GM12878 (cell line): ENCODE measurements at regions of chr4 and their contacts with region 1.

Region 1: DNA sequence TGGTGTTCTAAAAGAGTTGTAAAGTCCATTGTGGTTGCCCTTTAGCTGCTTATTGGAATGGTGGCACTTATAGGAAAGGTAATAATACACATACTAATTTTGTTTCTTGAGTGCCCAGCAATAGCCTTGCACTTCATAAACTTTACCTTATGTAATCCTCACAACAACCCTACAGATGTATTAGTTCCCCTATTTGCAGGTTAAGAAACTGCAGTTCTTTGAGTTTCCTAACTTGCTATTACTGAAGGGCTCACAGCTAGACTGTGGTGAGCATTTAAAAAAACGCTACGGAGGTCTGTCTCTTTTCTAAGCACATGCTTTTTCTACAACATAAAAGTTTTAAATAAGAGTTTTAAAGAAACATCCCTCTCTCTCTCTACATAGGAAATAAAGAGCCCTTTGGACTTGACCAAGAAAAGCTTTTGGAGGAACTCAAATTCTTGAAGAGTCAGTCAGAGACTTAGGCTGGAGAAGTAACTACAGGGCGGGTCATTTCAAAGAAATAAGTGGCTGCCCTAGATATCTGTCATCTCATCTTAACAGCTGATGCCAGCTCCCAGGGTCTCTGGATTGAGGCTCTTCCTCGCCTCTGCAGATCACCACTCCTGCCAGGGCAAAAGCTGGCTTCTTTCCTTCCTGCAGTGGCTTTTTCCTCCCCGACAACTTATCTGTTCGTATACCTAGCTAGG is 42.0 kb upstream of the FBXW7 start:
- DNase-seq: no peak
- ATAC-seq: peak; percentile 94
- H3K4me3 ChIP-seq: no peak overlapping the region
- H3K27ac ChIP-seq: no peak overlapping the region
- H3K4me1 ChIP-seq: no peaks in the 10 kb centered on the region
- H3K27me3 ChIP-seq: no peaks in the 10 kb centered on the region
- CTCF ChIP-seq: 0 out of 6 replicates have a peak, but pooled peaks of 1 of the 3 experiments have one; percentile 5
- EP300 ChIP-seq: no peak
- POLR2A ChIP-seq: no peak
- RAD21 ChIP-seq: no peak

Region 2: GRCh38 chr4:151921811-151922210 is 656.0 kb before region 1 on chr4:
- CTCF ChIA-PET with region 1: no interaction called
- POLR2A ChIA-PET with region 1: no interaction called
- RAD21 ChIA-PET with region 1: no interaction called
- SMC1A ChIA-PET with region 1: no interaction called
- in situ Hi-C with region 1: no loop called
- intact Hi-C with region 1: no loop called
- DNase-seq: no peak
- ATAC-seq: no peak
- H3K4me3 ChIP-seq: no peak overlapping the region
- H3K27ac ChIP-seq: no peak overlapping the region
- H3K4me1 ChIP-seq: no peaks in the 10 kb centered on the region
- H3K27me3 ChIP-seq: no peaks in the 10 kb centered on the region
- CTCF ChIP-seq: no peak
- EP300 ChIP-seq: no peak
- POLR2A ChIP-seq: no peak
- RAD21 ChIP-seq: no peak

Region 3: GRCh38 chr4:152591396-152591795 is 13.5 kb after region 1 on chr4:
- CTCF ChIA-PET with region 1: interaction called, 3 read pairs
- POLR2A ChIA-PET with region 1: interaction called, 4 read pairs
- RAD21 ChIA-PET with region 1: interaction called, 3 read pairs
- SMC1A ChIA-PET with region 1: interaction called, 37 read pairs
- in situ Hi-C with region 1: no loop called
- intact Hi-C with region 1: no loop called
- DNase-seq: no peak
- ATAC-seq: peak; percentile 61
- H3K4me3 ChIP-seq: no peak overlapping the region
- H3K27ac ChIP-seq: no peak overlapping the region
- H3K4me1 ChIP-seq: peaks cover 18% of the 10 kb centered on the region
- H3K27me3 ChIP-seq: no peaks in the 10 kb centered on the region
- CTCF ChIP-seq: no peak
- EP300 ChIP-seq: no peak
- POLR2A ChIP-seq: no peak
- RAD21 ChIP-seq: no peak

Region 4: DNA sequence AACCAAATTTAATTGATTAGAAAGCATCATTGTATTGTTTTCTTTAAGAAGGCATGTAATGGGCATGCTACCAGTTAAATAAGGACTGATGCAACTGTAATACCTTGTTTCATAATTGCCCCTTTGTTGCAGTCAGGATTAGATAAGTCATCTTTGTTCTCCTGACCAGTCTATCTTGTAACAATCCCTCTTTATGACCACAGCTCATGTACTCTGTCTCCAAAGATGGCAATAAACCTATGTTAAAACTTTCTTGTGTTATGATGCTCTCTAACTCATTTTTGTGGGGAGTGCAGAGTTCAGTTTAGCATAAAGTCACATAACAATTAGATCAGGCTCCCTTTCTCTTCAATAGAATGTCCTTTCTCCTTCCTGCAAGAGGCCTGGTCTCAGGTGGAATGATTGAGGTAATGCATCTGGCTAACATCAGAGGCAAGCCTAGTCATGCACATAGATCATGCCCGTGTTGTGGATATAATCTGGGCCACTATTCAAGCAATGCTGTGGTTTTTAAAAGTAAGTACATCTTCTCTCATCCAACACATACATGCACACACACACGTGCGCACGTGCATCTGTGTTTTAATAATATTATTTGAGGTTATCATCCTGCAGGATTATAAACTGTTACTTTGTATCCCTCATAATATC is 56.4 kb after region 1 on chr4:
- CTCF ChIA-PET with region 1: interaction called, 10 read pairs
- POLR2A ChIA-PET with region 1: no interaction called
- RAD21 ChIA-PET with region 1: interaction called, 14 read pairs
- SMC1A ChIA-PET with region 1: interaction called, 18 read pairs
- in situ Hi-C with region 1: no loop called
- intact Hi-C with region 1: no loop called
- DNase-seq: no peak
- ATAC-seq: no peak
- H3K4me3 ChIP-seq: no peak overlapping the region
- H3K27ac ChIP-seq: no peak overlapping the region
- H3K4me1 ChIP-seq: peaks cover 25% of the 10 kb centered on the region
- H3K27me3 ChIP-seq: no peaks in the 10 kb centered on the region
- CTCF ChIP-seq: no peak
- EP300 ChIP-seq: no peak
- POLR2A ChIP-seq: no peak
- RAD21 ChIP-seq: no peak